Body of pancreas (tissue), 4 donors: ENCODE measurements at regions of chr7 and their contacts with region 1.

Region 1: DNA sequence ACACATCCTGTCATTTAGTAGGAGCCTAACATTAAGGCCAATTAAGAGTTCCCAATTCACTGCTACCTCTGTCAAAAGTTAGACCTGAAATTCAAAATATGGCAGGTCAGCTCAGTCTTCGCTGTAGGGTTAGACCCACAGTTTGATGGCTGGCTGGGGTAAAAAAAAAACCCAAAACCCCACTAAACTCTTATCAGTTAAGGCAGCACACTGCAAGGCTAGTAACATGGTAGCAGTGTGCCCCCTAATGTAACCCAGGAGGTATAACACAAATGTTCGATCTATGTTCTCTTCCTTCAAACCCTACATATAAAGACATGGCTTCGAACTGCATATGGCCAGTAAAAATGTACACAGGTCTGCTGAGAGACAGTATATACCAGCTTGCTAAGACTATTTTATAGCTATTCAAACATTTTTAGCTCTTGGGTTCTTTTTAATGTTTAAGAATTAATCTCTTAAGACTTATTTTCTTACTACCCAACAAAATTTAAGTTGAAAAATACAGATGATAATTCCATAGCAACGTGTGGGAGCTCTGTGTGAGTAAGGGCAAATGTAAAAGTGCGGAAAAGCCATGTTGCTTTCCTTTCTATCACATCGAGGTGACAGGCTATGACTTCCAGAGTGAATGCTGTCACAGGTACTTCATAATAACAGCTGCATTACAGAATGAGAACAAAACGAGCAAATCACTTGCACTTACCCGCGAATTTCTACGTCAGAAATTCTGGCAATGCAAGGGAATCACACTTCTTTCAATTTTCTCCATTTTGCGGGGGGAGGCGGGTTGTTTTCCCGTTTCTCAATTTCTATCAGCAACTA is 168.4 kb upstream of the IMMP2L start:
- DNase-seq: no peak
- ATAC-seq: no peak
- H3K4me3 ChIP-seq: no peak overlapping the region
- H3K27ac ChIP-seq: no peak overlapping the region
- H3K4me1 ChIP-seq: peaks cover 6% of the 10 kb centered on the region
- H3K27me3 ChIP-seq: no peaks in the 10 kb centered on the region
- CTCF ChIP-seq: peak in 5 of 7 experiments; percentile 15 to 28 (median 25)
- POLR2A ChIP-seq: no peak

Region 2: GRCh38 chr7:111089822-111090426 is 640.8 kb before region 1 on chr7:
- intact Hi-C with region 1: loop called (anchors 5 kb)
- DNase-seq: no peak
- ATAC-seq: peak; percentile 63
- H3K4me3 ChIP-seq: no peak overlapping the region
- H3K27ac ChIP-seq: no peak overlapping the region
- H3K4me1 ChIP-seq: peaks cover 5% of the 10 kb centered on the region
- H3K27me3 ChIP-seq: no peaks in the 10 kb centered on the region
- CTCF ChIP-seq: peak; percentile 43 to 85 (median 62)
- POLR2A ChIP-seq: no peak

Region 3: DNA sequence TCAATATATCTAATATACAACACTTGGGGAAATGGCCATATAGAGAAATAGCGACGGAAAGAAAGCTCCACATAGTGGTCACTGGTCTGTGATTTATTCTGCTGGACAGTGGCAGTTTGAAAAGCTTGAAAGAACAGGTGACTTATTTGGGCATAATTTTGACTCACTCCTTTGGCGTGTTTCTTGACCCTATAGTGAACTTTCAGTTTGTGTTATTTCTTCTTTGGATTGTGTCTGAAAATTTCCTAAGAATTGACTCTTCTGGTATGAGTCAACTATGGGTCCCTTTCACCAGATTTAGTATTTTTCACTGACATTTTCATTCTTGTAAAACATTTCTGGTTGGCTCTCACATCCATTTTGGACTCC is 142.6 kb before region 1 on chr7:
- intact Hi-C with region 1: no loop called
- DNase-seq: no peak
- ATAC-seq: no peak
- H3K4me3 ChIP-seq: no peak overlapping the region
- H3K27ac ChIP-seq: no peak overlapping the region
- H3K4me1 ChIP-seq: no peaks in the 10 kb centered on the region
- H3K27me3 ChIP-seq: no peaks in the 10 kb centered on the region
- CTCF ChIP-seq: no peak
- POLR2A ChIP-seq: no peak